Cardiac septum (tissue), 1 donor: ENCODE measurements at regions of chr7 and their contacts with region 1.

Region 1: DNA sequence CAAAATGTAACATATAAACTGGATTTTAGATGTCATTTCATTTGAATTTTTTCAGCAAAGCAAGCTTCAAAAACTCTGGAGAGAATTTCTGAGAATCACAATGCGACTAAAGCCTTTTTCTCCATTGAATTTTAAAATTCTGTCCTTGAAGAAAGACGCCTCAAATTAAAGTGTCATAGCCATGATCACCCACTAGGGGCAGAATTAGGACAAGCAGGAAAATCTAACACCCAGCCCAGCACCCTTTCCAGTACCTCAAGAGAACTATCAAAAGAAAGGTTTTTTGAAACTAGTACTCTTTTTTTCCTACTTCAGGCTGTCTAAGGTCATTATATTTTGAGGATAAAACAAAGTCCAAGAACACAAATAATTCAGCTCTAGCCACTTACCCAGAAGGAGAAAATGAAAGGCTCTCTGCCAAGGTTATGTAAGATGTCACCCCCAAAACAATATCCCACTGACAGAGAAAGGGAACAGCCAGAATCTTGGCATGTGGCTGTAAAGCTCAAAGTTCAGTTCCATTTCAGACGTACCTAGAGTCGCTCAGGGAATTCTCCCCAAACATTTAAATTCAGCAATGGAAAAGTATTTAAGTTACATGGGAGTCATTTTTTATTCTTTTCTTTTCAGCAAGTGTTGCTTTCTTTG is 299.4 kb downstream of the SNX13 start:
- DNase-seq: no peak

Region 2: DNA sequence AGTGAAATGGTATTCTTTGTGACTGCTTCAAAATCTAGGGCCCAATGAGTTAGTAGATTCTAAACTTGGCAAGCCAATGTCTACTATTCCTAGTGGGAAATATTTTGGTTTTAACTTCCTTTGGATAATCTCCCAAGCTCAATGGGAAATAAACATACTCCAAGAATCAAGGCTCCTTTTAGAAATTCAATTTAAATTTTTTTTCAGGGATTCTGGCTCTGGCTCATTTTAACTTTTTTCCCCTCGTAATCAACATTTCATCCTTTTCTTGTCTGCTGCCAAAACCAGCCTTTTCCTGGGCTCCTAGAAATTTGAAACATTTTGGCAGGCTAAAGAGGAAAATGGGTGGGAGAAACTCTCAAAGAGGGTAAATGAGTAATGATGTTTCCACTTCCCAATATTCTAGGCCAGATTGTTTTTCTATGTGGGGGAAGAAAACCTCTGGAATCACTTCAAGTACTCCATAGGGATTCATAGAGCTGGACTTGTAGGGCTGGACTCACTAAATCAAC is 673.5 kb before region 1 on chr7:
- intact Hi-C with region 1: loop called (anchors 5 kb)
- DNase-seq: no peak

Region 3: DNA sequence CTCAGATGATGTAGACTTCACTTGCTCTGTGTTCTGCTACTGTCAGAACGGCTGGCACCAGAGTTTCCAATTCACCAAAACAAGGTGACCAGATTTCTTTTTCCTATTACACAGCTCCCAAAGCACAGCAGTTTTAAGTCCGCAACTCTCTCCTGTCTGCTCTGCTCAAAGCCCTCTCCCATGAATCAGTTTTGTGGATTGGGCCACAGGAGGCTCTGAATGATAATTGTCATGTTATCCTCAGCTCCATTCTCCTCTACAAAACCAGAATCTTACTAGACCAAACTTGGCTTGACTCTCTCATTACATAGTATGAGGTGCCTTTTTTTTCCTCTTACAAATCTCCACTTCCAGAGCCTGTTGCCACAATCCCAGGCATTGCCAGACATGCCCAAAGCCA is 76.0 kb after region 1 on chr7:
- intact Hi-C with region 1: no loop called
- DNase-seq: no peak

Region 4: GRCh38 chr7:17781491-17782215 is 140.8 kb after region 1 on chr7:
- intact Hi-C with region 1: no loop called
- DNase-seq: no peak